ENCODE measurements at regions of chr5 and their contacts with region 1.

Region 1: GRCh38 chr5:126600631-126601511 is at the start of gene PHAX:
- DNase-seq: peak; percentile 90
- H3K27ac ChIP-seq: peak within 1 kb of the TSS; percentile 78
- CTCF ChIP-seq: peak; percentile 95

Region 2: GRCh38 chr5:126615286-126615685 is 14.4 kb after region 1 on chr5:
- CTCF ChIA-PET with region 1: interaction called, 13 read pairs
- POLR2A ChIA-PET with region 1: no interaction called
- DNase-seq: no peak
- H3K27ac ChIP-seq: no peak overlapping the region
- CTCF ChIP-seq: no peak

Measured in RWPE1 (cell line).